GM18951 (cell line): ENCODE measurements at regions of chr1 and their contacts with region 1.

Region 1: GRCh38 chr1:27300341-27301051 is 21.5 kb upstream of the TMEM222 start:
- POLR2A ChIP-seq: no peak

Region 2: DNA sequence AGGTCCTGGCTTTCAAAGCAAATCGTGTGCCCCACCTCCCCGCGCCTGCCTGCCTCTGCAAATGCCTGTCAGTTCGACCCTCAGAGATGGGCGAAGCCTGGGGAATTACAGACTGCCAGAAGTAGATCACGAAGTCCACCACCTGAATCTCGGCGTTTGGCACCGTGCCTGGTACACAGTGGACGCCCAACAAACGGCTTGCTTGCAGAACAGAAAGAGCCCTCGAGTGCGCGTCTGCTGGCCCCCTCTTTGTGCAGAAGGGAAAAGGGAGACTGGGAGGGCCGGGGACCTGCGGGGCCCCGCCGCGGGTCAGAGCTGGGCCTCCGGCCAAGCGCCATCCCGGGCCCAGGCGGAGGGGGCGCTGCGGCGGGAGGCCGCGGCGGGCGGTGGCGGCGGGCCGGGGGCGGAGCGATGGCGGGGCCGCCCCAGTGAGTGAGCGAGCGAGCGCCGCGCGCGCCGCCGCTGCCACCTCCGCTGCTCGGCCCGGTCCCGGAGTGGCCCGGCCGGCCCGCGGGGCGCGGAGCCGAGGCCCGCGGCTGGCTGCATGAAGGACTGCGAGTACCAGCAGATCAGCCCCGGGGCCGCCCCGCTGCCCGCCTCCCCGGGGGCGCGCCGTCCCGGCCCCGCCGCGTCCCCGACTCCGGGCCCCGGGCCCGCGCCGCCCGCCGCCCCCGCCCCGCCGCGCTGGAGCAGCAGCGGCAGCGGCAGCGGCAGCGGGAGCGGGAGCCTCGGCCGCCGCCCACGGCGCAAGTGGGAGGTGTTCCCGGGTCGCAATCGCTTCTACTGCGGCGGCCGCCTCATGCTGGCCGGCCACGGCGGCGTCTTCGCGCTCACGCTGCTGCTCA is 474.0 kb before region 1 on chr1 and contains the start of gene ZDHHC18:
- in situ Hi-C with region 1: no loop called
- POLR2A ChIP-seq: peak; percentile 87

Region 3: DNA sequence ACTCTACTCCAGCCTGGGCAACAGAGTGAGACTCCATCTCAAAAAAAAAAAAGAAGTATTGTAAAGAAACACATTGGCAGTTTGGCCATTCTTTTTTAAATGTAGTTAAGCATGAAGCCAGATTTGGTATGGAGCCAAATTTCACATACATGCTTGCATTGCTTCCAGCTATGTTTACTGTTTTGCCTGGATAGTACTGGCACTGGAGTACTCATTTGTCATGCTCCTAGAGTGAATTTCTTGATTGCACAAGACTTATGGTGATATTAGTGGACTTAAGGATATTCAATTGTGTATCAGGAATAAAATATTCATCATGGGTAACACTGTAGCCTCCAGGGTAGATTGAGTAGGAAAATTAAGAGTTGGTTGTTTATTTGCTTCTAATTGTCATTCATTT is 121.1 kb before region 1 on chr1:
- in situ Hi-C with region 1: no loop called
- POLR2A ChIP-seq: no peak

Region 4: GRCh38 chr1:27392096-27392777 is 91.7 kb after region 1 on chr1 and contains the start of gene GPR3:
- in situ Hi-C with region 1: loop called (anchors 5 kb)
- POLR2A ChIP-seq: peak; percentile 25

Region 5: DNA sequence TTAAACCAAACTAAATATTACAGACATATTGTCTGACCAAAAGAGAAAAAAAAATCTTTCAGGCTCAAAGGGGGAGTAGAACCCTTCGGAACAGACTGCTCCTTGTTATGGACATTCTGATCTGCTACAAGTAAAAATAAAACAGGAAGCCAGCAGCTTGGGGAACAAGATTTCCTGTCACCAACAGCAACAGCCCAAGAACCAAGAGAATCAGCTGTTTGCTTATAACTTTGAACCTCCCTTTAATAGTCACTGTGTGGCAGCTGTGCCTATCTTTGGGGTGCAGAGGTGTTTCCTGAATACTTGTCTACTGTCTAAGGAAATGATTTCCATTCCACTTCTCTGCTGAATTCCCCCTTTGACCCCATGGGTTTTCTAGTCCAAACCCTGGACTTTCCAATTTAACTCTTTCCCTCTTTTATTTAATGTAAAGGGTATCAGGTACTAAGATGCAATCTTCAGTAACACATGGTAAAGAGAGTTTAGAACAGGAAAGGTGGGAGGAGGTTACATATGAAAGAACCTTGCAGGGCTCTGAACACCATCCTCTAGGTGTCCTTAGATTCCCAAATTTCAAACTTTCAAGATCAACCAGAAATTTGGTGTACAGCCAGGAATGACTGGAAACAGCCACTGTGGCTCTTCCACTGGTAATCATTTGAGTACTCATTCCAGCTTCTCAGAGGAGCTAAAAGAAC is 130.6 kb after region 1 on chr1:
- in situ Hi-C with region 1: no loop called
- POLR2A ChIP-seq: no peak